ENCODE measurements at regions of chr5 and their contacts with region 1.

Region 1: GRCh38 chr5:142364251-142365145 is 39.7 kb upstream of the SPRY4 start:
- DNase-seq: no peak
- ATAC-seq: peak; percentile 67
- H3K4me3 ChIP-seq: peak overlapping the region; percentile 56 to 69
- H3K27ac ChIP-seq: peak overlapping the region; percentile 99
- H3K4me1 ChIP-seq: peaks cover 84 to 97% of the 10 kb centered on the region in 2 experiments
- H3K27me3 ChIP-seq: no peaks in the 10 kb centered on the region
- CTCF ChIP-seq: peak in 1 of 3 experiments; percentile 18; a peak in 1 of 6 replicates
- POLR2A ChIP-seq: peak; percentile 56
- RAD21 ChIP-seq: no peak

Region 2: GRCh38 chr5:142439207-142439860 is 74.8 kb after region 1 on chr5:
- CTCF ChIA-PET with region 1: no interaction called
- POLR2A ChIA-PET with region 1: interaction called, 27 read pairs
- RAD21 ChIA-PET with region 1: no interaction called
- intact Hi-C with region 1: no loop called
- DNase-seq: no peak
- ATAC-seq: no peak
- H3K4me3 ChIP-seq: no peak overlapping the region
- H3K27ac ChIP-seq: no peak overlapping the region
- H3K4me1 ChIP-seq: peaks cover 77 to 88% of the 10 kb centered on the region in 2 experiments
- H3K27me3 ChIP-seq: no peaks in the 10 kb centered on the region
- CTCF ChIP-seq: no peak
- POLR2A ChIP-seq: no peak
- RAD21 ChIP-seq: no peak

Region 3: GRCh38 chr5:142446131-142446959 is 81.8 kb after region 1 on chr5:
- CTCF ChIA-PET with region 1: no interaction called
- POLR2A ChIA-PET with region 1: interaction called, 27 read pairs
- RAD21 ChIA-PET with region 1: no interaction called
- intact Hi-C with region 1: no loop called
- DNase-seq: peak; percentile 80
- ATAC-seq: peak; percentile 60
- H3K4me3 ChIP-seq: peak overlapping the region; percentile 35 to 37
- H3K27ac ChIP-seq: peak overlapping the region; percentile 87
- H3K4me1 ChIP-seq: peaks cover 58 to 66% of the 10 kb centered on the region in 2 experiments
- H3K27me3 ChIP-seq: no peaks in the 10 kb centered on the region
- CTCF ChIP-seq: no peak
- POLR2A ChIP-seq: peak; percentile 18
- RAD21 ChIP-seq: no peak

Region 4: GRCh38 chr5:142472300-142472951 is 107.9 kb after region 1 on chr5:
- CTCF ChIA-PET with region 1: no interaction called
- POLR2A ChIA-PET with region 1: interaction called, 14 read pairs
- RAD21 ChIA-PET with region 1: no interaction called
- intact Hi-C with region 1: loop called (anchors 10 kb)
- DNase-seq: peak; percentile 97
- ATAC-seq: peak; percentile 89
- H3K4me3 ChIP-seq: peak overlapping the region; percentile 21 to 36
- H3K27ac ChIP-seq: peak overlapping the region; percentile 67
- H3K4me1 ChIP-seq: peaks cover 28 to 48% of the 10 kb centered on the region in 2 experiments
- H3K27me3 ChIP-seq: no peaks in the 10 kb centered on the region
- CTCF ChIP-seq: no peak
- POLR2A ChIP-seq: no peak
- RAD21 ChIP-seq: no peak

Region 5: GRCh38 chr5:142529626-142530278 is 165.3 kb after region 1 on chr5:
- CTCF ChIA-PET with region 1: no interaction called
- POLR2A ChIA-PET with region 1: no interaction called
- RAD21 ChIA-PET with region 1: interaction called in 1 of 2 experiments, 4 read pairs
- intact Hi-C with region 1: loop called (anchors 5 kb)
- DNase-seq: peak; percentile 90
- ATAC-seq: peak; percentile 86
- H3K4me3 ChIP-seq: peak overlapping the region in 1 of 2 experiments; percentile 6; a peak in 1 of 4 replicates
- H3K27ac ChIP-seq: peak overlapping the region; percentile 54
- H3K4me1 ChIP-seq: peaks cover 22 to 49% of the 10 kb centered on the region in 2 experiments
- H3K27me3 ChIP-seq: no peaks in the 10 kb centered on the region
- CTCF ChIP-seq: no peak
- POLR2A ChIP-seq: no peak
- RAD21 ChIP-seq: peak; percentile 26; the same call in 1 of the 2 replicates

Measured in HCT116 (cell line).